Head of caudate nucleus (tissue), 42 donors: ENCODE measurements at regions of chr13 and their contacts with region 1.

Region 1: DNA sequence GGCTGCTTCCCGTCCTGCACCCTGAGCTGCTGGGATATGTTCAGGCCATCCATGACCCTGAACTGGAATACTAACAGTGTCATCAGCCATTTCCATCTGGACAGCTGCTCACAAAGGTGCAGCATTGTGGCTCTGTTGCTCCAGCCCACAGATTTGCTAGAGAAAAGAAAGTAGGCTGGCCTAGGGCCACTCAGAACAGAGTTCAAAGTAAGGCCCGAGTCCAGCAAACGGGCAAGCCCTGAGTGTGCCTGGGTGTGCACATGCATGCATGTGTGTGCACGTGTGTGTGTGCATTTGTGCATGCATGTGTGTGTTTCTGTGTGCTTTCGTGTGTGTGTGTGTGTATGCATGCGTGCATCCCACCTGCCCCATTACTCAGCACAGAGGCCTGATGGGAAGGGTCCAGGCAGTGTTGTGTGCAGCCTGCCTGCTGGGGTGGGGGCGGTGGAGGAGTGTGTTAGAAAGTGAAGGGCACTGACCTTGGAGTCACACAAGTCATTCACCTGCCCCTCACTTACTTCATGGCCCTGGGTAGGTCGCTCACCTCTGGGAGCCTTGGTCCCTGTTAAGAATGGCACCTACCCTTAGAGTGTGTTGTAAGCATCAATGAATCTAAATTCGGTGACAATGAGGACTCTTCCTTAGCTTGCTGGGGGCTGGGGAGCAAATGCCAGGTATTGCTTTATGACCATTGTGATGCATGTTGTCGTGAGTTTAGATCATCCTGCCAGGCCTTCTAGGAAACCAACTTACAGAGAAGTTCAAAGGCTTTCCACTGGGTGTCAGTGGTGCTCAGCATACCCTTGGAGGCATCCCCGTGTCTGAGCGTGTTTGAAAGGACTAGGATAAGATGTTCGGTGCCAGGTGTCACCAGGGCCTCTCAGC is 53.2 kb downstream of the GPR12 start:
- DNase-seq: peak in 41 of 42 donors; percentile 29 to 88 (median 70)

Region 2: DNA sequence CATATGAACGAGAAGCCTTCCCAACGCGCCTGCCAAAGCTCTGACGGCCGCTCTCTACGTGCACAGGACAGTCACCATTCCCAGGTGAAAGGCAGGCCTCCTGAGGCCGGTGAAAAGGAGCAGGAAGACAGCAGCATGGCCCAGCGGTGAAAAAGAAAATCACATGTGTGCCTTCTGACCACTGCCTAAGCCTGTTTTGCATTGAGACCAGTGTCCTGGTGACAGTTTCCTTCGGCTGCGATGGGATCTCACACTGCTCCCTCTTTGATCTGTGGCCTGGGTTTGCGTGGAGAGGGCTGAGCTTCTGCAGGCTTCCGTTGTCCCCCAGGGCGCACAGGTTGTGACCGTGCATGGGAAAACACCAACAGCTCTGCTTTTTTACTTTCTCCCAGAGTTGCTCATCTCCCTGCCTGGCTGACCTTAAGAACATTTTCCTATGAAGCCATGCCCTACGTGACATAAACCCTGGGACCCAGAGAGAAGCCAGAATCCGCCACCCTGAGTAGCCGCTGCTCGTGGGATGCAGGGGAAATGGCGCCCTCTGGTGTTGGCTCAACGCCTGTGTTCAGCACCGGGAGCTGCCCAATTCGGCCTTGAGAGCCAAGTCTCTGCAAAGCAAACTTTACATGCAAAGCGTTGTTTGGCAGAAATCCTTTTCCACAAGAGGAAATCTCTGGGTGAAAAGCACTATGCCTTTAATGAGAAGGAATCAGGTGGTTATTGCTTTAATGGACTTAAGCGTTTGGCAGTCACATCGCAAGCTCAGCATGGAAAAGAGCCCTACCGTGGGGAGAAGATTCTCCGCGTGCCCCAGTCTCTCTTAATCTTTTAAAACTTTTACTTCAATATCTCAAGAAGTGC is 165.4 kb after region 1 on chr13:
- intact Hi-C with region 1: loop called (anchors 5 kb)
- DNase-seq: peak; percentile 28 to 93 (median 77)

Region 3: DNA sequence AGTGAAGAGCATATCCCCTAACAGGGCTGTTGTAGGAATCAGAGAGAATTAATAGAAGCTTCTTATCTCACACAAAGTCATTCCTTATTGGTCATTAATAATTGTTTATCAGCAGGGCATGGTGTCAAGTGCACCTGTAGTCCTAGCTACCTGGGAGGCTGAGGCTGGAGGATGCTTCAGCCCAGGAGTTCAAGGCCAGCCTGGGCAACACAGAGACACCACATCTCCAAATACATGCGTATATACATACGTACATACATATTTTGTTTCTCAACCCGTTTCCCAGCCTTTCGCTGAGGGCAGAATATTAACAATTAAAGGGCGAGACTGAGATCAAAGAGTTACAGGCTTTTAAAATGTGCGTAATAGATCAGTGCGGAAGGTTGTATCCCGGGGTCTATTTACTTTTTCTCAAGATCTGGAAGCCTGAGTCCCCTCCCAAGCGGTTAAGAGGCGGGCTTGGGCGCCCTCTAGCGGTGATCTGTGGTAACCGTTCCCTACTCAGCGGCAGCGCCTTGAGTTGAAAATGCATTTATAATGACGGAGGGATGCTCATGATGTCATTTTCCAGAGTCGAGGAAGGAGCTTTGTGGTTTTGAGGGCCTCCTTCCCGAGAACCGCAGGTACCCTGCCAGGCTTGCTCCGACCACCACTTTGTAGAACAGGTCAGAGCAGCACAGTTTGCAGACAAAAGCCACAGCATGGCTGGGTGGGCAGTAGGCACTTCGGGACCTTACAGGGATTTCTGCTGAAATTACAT is 222.8 kb after region 1 on chr13:
- intact Hi-C with region 1: loop called (anchors 5 kb)
- DNase-seq: peak; percentile 58 to 94 (median 86)